ENCODE measurements at regions of chr12 and their contacts with region 1.

Region 1: GRCh38 chr12:89840162-89840922 is 131.7 kb upstream of the ATP2B1 start:
- DNase-seq: no peak
- H3K4me3 ChIP-seq: no peak overlapping the region
- CTCF ChIP-seq: no peak

Region 2: GRCh38 chr12:89796798-89797382 is 43.5 kb before region 1 on chr12:
- in situ Hi-C with region 1: loop called (anchors 5 kb)
- DNase-seq: no peak
- H3K4me3 ChIP-seq: no peak overlapping the region
- CTCF ChIP-seq: no peak

Region 3: GRCh38 chr12:89935825-89936224 is 95.5 kb after region 1 on chr12:
- in situ Hi-C with region 1: loop called (anchors 5 kb)
- DNase-seq: no peak
- H3K4me3 ChIP-seq: no peak overlapping the region
- CTCF ChIP-seq: no peak

Region 4: DNA sequence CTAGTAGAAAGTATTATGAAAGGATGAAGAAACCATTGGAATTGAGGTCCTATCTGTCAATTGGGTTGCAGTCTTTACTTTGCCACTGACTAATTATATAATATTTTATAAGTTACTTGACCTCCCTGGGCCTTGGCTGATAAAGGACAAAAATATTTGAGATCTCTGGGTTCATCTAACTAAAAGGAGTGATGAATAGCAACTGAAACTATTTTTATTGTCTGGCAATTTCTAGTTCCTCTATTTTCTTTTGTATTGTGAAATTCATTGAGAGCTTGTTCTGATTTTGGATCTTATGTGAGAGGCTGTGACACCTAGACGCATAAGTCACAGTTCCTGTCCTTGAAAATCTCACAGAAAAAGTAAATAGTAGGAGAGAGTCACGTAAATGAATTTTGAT is 283.9 kb after region 1 on chr12:
- in situ Hi-C with region 1: no loop called
- DNase-seq: no peak
- H3K4me3 ChIP-seq: no peak overlapping the region
- CTCF ChIP-seq: no peak

Measured in astrocyte of the cerebellum (primary cell).